ENCODE measurements at regions of chr3 and their contacts with region 1.

Region 1: DNA sequence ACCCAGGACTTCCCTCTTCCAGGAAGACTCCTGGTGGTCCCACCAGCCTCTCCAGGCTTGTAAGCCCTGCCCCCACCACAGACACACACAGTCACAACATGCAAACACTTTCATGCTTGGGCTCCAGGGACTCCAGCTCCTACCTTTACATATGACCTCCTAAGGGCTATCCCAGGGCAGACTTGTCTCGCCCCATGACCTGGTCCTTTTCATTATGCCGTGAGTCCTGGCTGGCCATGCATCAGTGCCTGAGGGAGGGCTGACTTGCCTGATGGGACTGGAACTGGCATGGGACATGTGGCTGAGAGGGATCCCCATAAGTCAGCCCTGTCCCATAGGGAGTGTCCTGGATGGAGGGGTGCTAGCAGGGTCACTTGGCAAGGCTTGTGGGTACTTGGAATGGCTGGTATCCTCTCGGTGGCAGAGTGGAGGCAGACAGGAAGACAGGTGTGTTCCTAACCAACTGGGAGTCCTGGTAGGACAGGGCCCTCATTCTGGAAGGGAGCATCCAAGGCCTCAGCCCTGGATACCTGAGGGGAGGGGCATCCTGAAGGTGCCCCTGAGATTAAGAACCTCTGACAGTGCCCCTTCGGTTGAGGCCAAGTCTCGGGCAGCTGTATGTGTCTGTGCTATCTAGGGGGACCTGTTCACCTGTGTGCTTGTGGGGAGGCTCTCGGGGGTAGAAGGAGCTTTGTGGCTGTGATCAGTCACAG is 540 bp upstream of the HHATL start:
- DNase-seq: peak in 1 of 2 donors; percentile 24
- H3K4me3 ChIP-seq: no peak overlapping the region
- H3K27ac ChIP-seq: no peak overlapping the region
- H3K4me1 ChIP-seq: no peaks in the 10 kb centered on the region
- H3K27me3 ChIP-seq: no peaks in the 10 kb centered on the region
- CTCF ChIP-seq: no peak
- POLR2A ChIP-seq: no peak

Region 2: GRCh38 chr3:42659451-42660130 is 43.5 kb before region 1 on chr3:
- intact Hi-C with region 1: loop called (anchors 1 kb)
- DNase-seq: no peak
- H3K4me3 ChIP-seq: no peak overlapping the region
- H3K27ac ChIP-seq: peak overlapping the region; percentile 21 to 61
- H3K4me1 ChIP-seq: peaks cover 0 to 3% of the 10 kb centered on the region in 2 donors
- H3K27me3 ChIP-seq: no peaks in the 10 kb centered on the region
- CTCF ChIP-seq: no peak
- POLR2A ChIP-seq: no peak